ENCODE measurements at regions of chr12 and their contacts with region 1.

Region 1: DNA sequence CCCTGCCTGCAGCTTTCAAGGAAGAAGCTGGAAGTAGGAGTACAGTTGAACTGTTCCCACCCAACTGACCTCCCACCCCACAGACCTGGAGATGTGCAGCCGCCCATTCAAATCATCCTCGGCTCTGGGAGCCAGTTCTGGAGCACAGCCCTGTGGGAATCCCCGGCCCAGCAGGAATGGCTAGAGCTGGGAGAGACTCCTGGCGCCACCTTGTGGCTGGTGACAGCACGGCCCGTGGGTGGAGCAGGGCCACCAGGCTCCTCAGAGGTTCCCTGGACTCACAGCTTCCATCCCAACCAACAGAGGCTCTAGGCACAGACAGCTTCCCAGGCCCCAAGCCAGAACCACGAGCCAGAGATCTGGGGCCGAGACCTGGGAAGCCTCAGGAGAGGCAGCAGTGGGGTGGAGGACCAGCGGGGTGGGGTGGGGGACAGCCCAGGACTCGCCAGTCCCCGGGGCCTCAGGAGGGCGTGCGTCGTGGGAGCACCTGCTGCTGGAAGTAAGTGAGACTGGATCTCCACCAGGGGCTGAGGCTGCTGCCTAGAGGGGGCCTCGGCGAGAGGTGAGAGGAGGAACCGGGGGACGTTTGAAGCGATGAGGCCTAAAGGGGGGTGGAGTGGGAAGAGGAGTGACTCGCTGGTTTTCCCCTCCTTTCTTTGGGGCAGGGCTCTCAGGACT is 43.4 kb downstream of the RNF34 start:
- DNase-seq: no peak
- ATAC-seq: peak; percentile 95
- H3K4me3 ChIP-seq: no peak overlapping the region
- H3K27ac ChIP-seq: no peak overlapping the region
- H3K4me1 ChIP-seq: no peaks in the 10 kb centered on the region
- H3K27me3 ChIP-seq: no peaks in the 10 kb centered on the region
- CTCF ChIP-seq: peak; percentile 76 to 92 (median 84)
- EP300 ChIP-seq: no peak
- POLR2A ChIP-seq: no peak
- RAD21 ChIP-seq: peak; percentile 76

Region 2: GRCh38 chr12:121060149-121061001 is 383.0 kb before region 1 on chr12:
- CTCF ChIA-PET with region 1: interaction called, 22 read pairs
- POLR2A ChIA-PET with region 1: no interaction called
- RAD21 ChIA-PET with region 1: interaction called, 6 read pairs
- SMC1A ChIA-PET with region 1: interaction called, 3 read pairs
- in situ Hi-C with region 1: no loop called
- intact Hi-C with region 1: no loop called
- DNase-seq: peak; percentile 56
- ATAC-seq: peak; percentile 96
- H3K4me3 ChIP-seq: peak overlapping the region; percentile 43
- H3K27ac ChIP-seq: peak overlapping the region; percentile 96
- H3K4me1 ChIP-seq: peaks cover 10% of the 10 kb centered on the region
- H3K27me3 ChIP-seq: no peaks in the 10 kb centered on the region
- CTCF ChIP-seq: peak; percentile 50 to 66 (median 56); a peak in 5 of 6 replicates
- EP300 ChIP-seq: no peak
- POLR2A ChIP-seq: peak; percentile 63
- RAD21 ChIP-seq: peak; percentile 69

Region 3: GRCh38 chr12:121214855-121215745 is 228.2 kb before region 1 on chr12:
- CTCF ChIA-PET with region 1: no interaction called
- POLR2A ChIA-PET with region 1: no interaction called
- RAD21 ChIA-PET with region 1: no interaction called
- SMC1A ChIA-PET with region 1: no interaction called
- in situ Hi-C with region 1: no loop called
- intact Hi-C with region 1: no loop called
- DNase-seq: no peak
- ATAC-seq: peak; percentile 50
- H3K4me3 ChIP-seq: no peak overlapping the region
- H3K27ac ChIP-seq: no peak overlapping the region
- H3K4me1 ChIP-seq: peaks cover 9% of the 10 kb centered on the region
- H3K27me3 ChIP-seq: no peaks in the 10 kb centered on the region
- CTCF ChIP-seq: no peak
- EP300 ChIP-seq: no peak
- POLR2A ChIP-seq: no peak
- RAD21 ChIP-seq: no peak

Region 4: DNA sequence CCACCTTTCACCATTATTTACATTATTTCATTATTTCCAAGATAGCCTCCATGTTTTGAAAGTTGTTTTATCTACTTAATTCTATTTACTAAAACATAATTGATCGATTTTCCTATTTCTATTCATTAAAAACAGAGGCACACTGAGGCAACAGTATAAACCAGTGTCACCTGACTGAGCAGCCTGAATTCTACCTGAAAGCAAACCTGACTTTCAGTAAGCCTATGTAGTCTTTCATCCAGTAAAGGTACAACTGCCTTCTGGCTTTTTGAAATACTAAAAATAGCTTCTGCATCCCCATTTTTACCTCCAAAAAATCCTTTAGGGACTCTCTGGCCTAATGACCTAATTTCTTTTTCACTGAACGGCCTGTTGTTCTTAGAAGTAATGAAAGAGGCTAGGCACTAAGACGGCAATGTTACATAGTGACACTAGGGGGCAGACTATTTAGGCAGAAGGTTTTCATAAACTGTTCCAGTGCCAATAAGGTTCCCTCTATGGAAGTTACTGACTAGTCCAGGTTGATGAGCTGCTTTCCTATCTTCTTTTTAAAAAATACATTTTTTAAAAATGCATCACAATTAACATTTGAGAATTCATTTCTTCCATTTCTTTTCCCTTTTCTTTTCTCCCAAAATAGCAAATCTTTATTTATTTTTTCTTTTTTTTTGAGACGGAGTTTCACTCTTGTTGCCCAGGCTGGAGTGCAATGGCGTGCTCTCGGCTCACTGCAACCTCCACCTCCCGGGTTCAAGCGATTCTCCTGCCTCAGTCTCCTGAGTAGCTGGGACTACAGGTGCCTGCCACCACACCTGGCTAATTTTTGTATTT is 108.6 kb before region 1 on chr12:
- CTCF ChIA-PET with region 1: interaction called, 90 read pairs
- POLR2A ChIA-PET with region 1: no interaction called
- RAD21 ChIA-PET with region 1: interaction called, 21 read pairs
- SMC1A ChIA-PET with region 1: interaction called, 31 read pairs
- in situ Hi-C with region 1: loop called (anchors 25 kb)
- intact Hi-C with region 1: loop called (anchors 1 kb)
- DNase-seq: peak; percentile 26
- ATAC-seq: peak; percentile 95
- H3K4me3 ChIP-seq: no peak overlapping the region
- H3K27ac ChIP-seq: no peak overlapping the region
- H3K4me1 ChIP-seq: no peaks in the 10 kb centered on the region
- H3K27me3 ChIP-seq: no peaks in the 10 kb centered on the region
- CTCF ChIP-seq: peak; percentile 76 to 82 (median 82)
- EP300 ChIP-seq: no peak
- POLR2A ChIP-seq: no peak
- RAD21 ChIP-seq: peak; percentile 75

Region 5: GRCh38 chr12:121399391-121400331 is 43.7 kb before region 1 on chr12 and contains the start of gene RNF34:
- CTCF ChIA-PET with region 1: interaction called, 15 read pairs
- POLR2A ChIA-PET with region 1: no interaction called
- RAD21 ChIA-PET with region 1: interaction called, 9 read pairs
- SMC1A ChIA-PET with region 1: interaction called, 4 read pairs
- in situ Hi-C with region 1: no loop called
- intact Hi-C with region 1: no loop called
- DNase-seq: peak; percentile 88
- ATAC-seq: peak; percentile 94
- H3K4me3 ChIP-seq: peak within 1 kb of the TSS; percentile 95
- H3K27ac ChIP-seq: peak within 1 kb of the TSS; percentile 93
- H3K4me1 ChIP-seq: no peaks in the 10 kb centered on the region; the same call in 1 of the 2 replicates
- H3K27me3 ChIP-seq: no peaks in the 10 kb centered on the region
- CTCF ChIP-seq: no peak
- EP300 ChIP-seq: no peak
- POLR2A ChIP-seq: peak; percentile 99
- RAD21 ChIP-seq: no peak
- polyA plus RNA-seq, gene RNF34: 111 to 121 TPM

Region 6: DNA sequence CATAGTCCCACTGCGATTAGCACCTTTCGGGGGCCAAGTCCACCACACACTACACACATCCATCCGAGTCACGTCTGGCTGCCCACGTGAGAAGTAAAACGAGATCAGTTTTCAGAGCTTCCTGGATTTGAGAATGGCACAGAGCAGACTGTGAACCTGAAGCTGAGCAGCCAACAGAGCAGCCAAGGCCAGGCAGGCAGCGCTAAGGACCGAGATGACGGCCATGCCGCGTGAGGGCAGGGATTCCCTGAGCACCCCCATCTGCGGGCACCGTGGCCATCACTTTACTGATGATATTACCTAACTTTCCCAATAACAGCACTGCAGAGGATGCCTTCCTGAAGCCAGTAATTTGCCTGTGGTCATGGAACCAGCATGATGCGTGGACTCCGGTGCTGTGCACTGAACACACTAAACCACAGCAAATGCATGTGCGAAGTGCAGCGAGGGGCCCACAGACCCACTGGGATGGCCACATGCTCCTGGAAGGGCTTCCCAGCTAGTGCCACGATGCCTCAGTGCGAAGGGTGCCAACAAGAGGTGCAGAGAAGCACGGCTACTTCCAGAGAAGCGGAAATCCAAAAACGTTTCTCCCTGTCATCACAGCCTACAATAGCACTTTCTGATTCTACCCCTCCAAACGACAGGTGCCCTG is 12.6 kb after region 1 on chr12:
- CTCF ChIA-PET with region 1: interaction called, 10 read pairs
- POLR2A ChIA-PET with region 1: interaction called, 5 read pairs
- RAD21 ChIA-PET with region 1: interaction called, 3 read pairs
- SMC1A ChIA-PET with region 1: interaction called, 3 read pairs
- in situ Hi-C with region 1: no loop called
- intact Hi-C with region 1: no loop called
- DNase-seq: no peak
- ATAC-seq: no peak
- H3K4me3 ChIP-seq: no peak overlapping the region
- H3K27ac ChIP-seq: no peak overlapping the region
- H3K4me1 ChIP-seq: peaks cover 10% of the 10 kb centered on the region
- H3K27me3 ChIP-seq: no peaks in the 10 kb centered on the region
- CTCF ChIP-seq: no peak
- EP300 ChIP-seq: no peak
- POLR2A ChIP-seq: no peak
- RAD21 ChIP-seq: no peak